Gastrocnemius medialis (tissue), 4 donors: ENCODE measurements at regions of chr20 and their contacts with region 1.

Region 1: GRCh38 chr20:34704177-34705007 is at the start of gene TP53INP2:
- DNase-seq: peak; percentile 90 to 96
- ATAC-seq: peak; percentile 79 to 91
- H3K4me3 ChIP-seq: peak within 1 kb of the TSS; percentile 69 to 98 (median 74)
- H3K27ac ChIP-seq: peak within 1 kb of the TSS; percentile 94 to 100 (median 95)
- H3K4me1 ChIP-seq: peaks cover 26 to 43% of the 10 kb centered on the region in 2 donors
- H3K27me3 ChIP-seq: no peaks in the 10 kb centered on the region
- CTCF ChIP-seq: no peak
- POLR2A ChIP-seq: peak; percentile 93 to 95
- total RNA-seq, gene TP53INP2: 2.9 to 26.7 (median 11.1) TPM

Region 2: DNA sequence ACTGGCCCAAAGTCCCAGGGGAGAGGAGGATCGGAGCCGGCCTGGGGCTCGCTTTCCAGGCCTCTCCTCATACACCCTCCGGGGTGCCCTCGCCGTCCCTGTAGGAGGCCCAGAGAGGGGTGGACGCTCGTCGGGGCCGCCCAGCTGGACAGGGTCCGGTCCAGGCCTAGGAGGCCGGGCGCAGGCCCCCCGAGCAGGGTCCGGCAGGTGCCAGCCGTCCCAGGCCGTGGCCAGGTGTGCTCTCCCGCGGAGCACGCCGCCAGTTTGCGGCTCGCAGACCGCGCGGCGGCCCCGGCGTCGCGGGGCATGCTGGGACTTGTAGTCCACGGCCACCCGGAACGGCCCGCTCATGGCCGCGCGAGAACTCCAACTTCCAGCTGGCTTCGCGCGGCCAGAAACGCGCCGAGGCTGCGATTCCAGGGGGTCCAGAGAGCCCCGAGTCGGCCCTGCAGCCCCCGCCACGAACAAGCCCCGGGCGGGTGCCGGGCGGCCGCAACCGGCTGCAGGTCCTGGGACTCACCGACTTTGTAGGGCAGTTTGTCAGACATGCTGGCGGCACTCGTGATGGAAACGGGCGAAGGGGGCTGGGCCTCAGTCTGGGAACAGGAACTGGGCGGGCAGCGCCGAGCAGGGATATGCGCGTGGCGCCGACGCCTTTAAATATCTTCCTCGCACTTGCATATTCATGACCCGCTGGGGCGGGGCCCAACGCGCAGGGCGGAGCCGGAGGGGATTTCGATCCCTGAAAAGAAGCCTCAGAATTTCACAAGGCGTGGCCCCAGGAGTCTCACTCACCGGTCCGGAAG is 401.5 kb before region 1 on chr20 and contains the start of gene AHCY:
- in situ Hi-C with region 1: no loop called
- intact Hi-C with region 1: loop called (anchors 2 kb)
- DNase-seq: peak; percentile 92 to 94
- ATAC-seq: peak; percentile 96
- H3K4me3 ChIP-seq: peak within 1 kb of the TSS; percentile 85 to 98 (median 95)
- H3K27ac ChIP-seq: peak within 1 kb of the TSS; percentile 95 to 99 (median 98)
- H3K4me1 ChIP-seq: peaks cover 21 to 26% of the 10 kb centered on the region in 2 donors
- H3K27me3 ChIP-seq: no peaks in the 10 kb centered on the region
- CTCF ChIP-seq: peak in 2 of 5 experiments; percentile 12 to 25
- POLR2A ChIP-seq: peak; percentile 81 to 96
- total RNA-seq, gene AHCY: 81.7 to 110 (median 98.6) TPM

Region 3: GRCh38 chr20:34538671-34539123 is 165.7 kb before region 1 on chr20:
- in situ Hi-C with region 1: loop called in 1 of 4 experiments (anchors 25 kb)
- intact Hi-C with region 1: loop called (anchors 5 kb)
- DNase-seq: peak in 1 of 2 donors; percentile 73
- ATAC-seq: peak; percentile 50 to 84
- H3K4me3 ChIP-seq: no peak overlapping the region
- H3K27ac ChIP-seq: no peak overlapping the region
- H3K4me1 ChIP-seq: peaks cover under 1 to 7% of the 10 kb centered on the region in 2 donors
- H3K27me3 ChIP-seq: no peaks in the 10 kb centered on the region
- CTCF ChIP-seq: peak; percentile 58 to 79 (median 70)
- POLR2A ChIP-seq: no peak

Region 4: DNA sequence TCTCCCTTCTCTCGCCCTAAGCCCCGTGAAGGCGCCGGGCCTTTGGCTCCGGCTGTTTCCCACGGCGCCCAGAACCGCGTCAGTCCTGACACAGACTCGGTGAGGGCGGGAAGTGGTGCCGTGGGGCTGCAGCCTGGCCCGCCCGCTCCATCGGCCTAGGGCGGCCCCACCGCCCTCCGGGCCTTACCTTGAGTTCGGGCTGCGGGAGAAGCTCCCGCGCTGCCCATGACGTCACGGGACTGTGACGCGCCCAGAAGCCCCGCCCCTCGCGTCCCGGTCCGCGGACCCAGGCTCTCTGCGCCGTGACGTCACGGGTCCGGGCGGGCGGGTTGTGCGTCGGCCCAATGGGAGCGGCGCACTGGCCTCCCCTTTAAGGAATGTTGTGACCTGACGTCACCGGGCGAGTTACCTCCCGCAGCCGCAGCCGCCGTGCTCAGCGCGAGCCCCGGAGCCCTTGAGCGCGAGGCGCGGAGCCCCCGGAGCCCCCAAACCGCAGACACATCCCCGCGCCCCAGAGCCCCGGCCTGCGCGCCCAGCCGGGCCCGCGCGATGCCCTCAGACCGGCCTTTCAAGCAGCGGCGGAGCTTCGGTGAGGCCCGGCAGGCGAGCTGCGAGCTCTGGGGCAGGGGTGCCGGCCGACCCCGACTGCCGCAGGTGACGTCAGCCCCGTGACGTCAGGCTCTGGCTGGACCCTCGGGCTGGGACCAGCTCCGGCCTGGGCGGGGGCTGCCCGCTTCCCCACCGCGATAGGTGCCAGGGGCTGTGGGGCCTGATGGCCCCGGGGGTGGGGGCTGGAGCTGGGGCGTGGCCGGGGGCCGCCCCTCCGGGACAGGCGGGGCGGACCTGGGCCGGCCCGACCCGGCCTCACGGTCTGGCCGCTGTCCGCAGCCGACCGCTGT is 145.8 kb before region 1 on chr20 and contains the start of gene MAP1LC3A:
- in situ Hi-C with region 1: no loop called
- intact Hi-C with region 1: loop called (anchors 1 kb)
- DNase-seq: peak; percentile 94
- ATAC-seq: peak; percentile 92 to 93
- H3K4me3 ChIP-seq: peak within 1 kb of the TSS; percentile 65 to 97 (median 85)
- H3K27ac ChIP-seq: peak within 1 kb of the TSS; percentile 81 to 90 (median 86)
- H3K4me1 ChIP-seq: peaks cover 3 to 5% of the 10 kb centered on the region in 2 donors
- H3K27me3 ChIP-seq: no peaks in the 10 kb centered on the region
- CTCF ChIP-seq: no peak
- POLR2A ChIP-seq: peak; percentile 74 to 84
- total RNA-seq, gene MAP1LC3A: 41.5 to 62.7 (median 56.4) TPM

Region 5: DNA sequence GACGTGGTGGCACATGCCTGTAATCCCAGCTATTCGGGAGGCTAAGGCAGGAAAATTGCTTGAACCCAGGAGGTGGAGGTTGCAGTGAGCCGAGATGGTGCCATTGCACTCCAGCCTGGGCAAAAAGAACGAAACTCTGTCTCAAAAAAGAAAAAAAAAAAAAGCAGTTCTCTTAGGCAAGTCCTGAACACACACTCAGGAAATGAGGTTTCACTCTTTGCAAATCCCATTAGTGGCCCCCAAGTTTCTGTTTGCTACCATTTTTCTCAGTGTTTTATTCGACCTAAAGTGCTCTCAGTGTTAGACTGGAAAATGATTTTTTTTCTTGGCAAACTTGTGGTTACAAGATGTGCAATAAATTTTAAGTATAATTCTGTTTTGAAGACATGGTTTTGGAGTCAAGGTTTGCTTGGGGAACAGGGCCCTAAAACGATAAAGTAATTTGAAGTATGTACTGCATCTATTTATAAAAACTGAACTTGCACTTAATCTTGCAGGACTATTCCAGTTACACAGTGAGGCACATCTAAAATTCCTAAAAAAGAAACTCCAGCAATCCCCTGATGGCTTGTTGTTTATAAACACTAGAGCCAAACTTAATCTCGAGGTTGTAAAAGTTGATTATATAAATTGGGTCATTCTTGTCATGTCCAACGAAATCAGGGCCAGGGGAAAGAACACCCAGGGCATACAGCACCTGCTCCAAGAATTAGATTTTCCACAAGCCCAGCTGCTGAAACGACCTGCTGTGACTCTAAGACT is 103.3 kb before region 1 on chr20:
- in situ Hi-C with region 1: no loop called
- intact Hi-C with region 1: no loop called
- DNase-seq: no peak
- ATAC-seq: peak in 1 of 2 donors; percentile 30
- H3K4me3 ChIP-seq: no peak overlapping the region
- H3K27ac ChIP-seq: peak overlapping the region; percentile 10 to 30 (median 23)
- H3K4me1 ChIP-seq: peaks cover 6 to 10% of the 10 kb centered on the region in 2 donors
- H3K27me3 ChIP-seq: no peaks in the 10 kb centered on the region
- CTCF ChIP-seq: no peak
- POLR2A ChIP-seq: no peak

Region 6: GRCh38 chr20:34629342-34629741 is 75.0 kb before region 1 on chr20:
- in situ Hi-C with region 1: no loop called
- intact Hi-C with region 1: loop called (anchors 2 kb)
- DNase-seq: peak; percentile 34 to 63
- ATAC-seq: peak; percentile 72 to 73
- H3K4me3 ChIP-seq: no peak overlapping the region
- H3K27ac ChIP-seq: peak overlapping the region; percentile 75 to 84 (median 78)
- H3K4me1 ChIP-seq: peaks cover 29 to 35% of the 10 kb centered on the region in 2 donors
- H3K27me3 ChIP-seq: no peaks in the 10 kb centered on the region
- CTCF ChIP-seq: no peak
- POLR2A ChIP-seq: no peak

Region 7: GRCh38 chr20:34663213-34663943 is 41.0 kb before region 1 on chr20:
- in situ Hi-C with region 1: no loop called
- intact Hi-C with region 1: no loop called
- DNase-seq: no peak
- ATAC-seq: no peak
- H3K4me3 ChIP-seq: no peak overlapping the region
- H3K27ac ChIP-seq: no peak overlapping the region
- H3K4me1 ChIP-seq: no peaks in the 10 kb centered on the region
- H3K27me3 ChIP-seq: no peaks in the 10 kb centered on the region
- CTCF ChIP-seq: no peak
- POLR2A ChIP-seq: no peak

Region 8: GRCh38 chr20:34676642-34677373 is 27.6 kb before region 1 on chr20 and contains the start of gene PIGU:
- in situ Hi-C with region 1: no loop called
- intact Hi-C with region 1: loop called (anchors 1 kb)
- DNase-seq: peak; percentile 92
- ATAC-seq: peak; percentile 98
- H3K4me3 ChIP-seq: peak within 1 kb of the TSS; percentile 80 to 93 (median 86)
- H3K27ac ChIP-seq: peak within 1 kb of the TSS; percentile 75 to 88 (median 81)
- H3K4me1 ChIP-seq: peaks cover 9% of the 10 kb centered on the region in 2 donors
- H3K27me3 ChIP-seq: no peaks in the 10 kb centered on the region
- CTCF ChIP-seq: peak in 4 of 5 experiments; percentile 31 to 38 (median 34)
- POLR2A ChIP-seq: peak; percentile 61 to 62
- total RNA-seq, gene PIGU: 12.8 to 14.1 (median 13.7) TPM

Region 9: DNA sequence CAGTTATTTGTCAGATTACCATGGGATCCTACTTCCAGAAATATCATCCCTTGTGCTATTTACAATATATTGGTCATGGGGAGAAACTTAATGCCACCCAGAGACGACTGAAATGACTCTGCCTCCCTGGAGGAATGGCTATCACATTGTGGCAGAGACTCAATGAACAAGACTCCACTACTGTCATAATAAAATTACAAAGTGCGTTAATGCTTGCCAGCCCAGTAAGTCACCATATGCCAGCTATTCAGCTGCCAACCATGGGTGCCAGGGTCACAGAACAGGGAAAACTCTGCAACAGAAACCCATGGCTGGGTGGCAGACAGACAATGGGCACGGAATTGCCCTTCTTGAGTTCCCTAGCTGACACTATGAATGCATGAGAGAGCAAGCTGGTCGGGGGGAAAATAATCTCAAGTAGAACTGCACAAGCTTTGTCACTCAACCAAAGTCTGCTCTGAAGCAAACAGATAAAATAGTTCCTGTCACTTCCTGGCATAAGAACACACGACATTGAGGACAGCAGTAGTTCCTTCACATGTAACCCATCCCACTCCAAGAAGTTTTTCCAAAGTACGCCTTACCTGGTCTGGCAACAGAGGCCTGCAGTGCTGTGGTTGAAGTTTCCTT is 31.8 kb after region 1 on chr20:
- in situ Hi-C with region 1: no loop called
- intact Hi-C with region 1: loop called (anchors 1 kb)
- DNase-seq: peak; percentile 76 to 82
- ATAC-seq: peak; percentile 89 to 96
- H3K4me3 ChIP-seq: no peak overlapping the region
- H3K27ac ChIP-seq: peak overlapping the region; percentile 78 to 85 (median 80)
- H3K4me1 ChIP-seq: peaks cover 37 to 49% of the 10 kb centered on the region in 2 donors
- H3K27me3 ChIP-seq: no peaks in the 10 kb centered on the region
- CTCF ChIP-seq: no peak
- POLR2A ChIP-seq: no peak